ENCODE measurements at regions of chr10 and their contacts with region 1.

Region 1: DNA sequence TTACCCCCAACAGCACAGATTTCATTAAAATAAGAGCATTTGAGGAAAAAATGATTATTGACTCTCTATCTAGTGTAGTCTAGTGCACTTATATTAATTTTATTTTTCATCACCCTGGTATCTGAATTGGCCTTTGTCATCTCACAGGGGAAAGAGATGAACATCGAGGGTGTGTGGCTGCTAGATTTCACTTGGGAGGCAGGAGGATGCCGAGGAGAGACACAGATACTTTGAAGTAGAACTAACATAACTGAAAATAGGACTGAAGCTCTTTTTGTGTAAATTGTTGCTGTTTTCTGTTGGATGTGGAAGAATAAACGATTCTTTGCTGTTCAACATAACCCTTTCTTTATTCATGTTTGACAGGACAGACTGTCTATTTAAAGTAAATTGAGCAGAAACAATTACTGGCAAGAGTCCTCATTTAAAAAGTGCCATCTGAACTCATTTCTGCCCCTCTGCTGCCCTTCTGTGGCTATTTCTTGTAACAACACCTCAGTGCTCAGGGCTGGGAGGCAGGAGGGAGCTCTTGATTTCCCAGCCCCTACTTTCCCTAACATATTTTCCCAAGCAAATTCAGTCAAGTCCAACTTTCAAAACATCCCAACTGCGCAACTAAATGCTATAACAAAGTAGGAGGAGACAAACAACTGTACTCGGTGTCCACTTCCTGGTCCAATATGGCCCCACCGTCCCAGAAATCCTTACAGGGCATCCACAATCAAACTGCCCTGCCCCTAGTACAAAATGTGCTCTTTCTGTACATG is 15.6 kb downstream of the LYZL1 start:
- DNase-seq: peak; percentile 54 to 66
- H3K4me3 ChIP-seq: no peak overlapping the region
- H3K27ac ChIP-seq: no peak overlapping the region
- H3K4me1 ChIP-seq: no peaks in the 10 kb centered on the region
- H3K27me3 ChIP-seq: no peaks in the 10 kb centered on the region
- CTCF ChIP-seq: peak; percentile 26 to 87 (median 75)
- POLR2A ChIP-seq: no peak

Region 2: DNA sequence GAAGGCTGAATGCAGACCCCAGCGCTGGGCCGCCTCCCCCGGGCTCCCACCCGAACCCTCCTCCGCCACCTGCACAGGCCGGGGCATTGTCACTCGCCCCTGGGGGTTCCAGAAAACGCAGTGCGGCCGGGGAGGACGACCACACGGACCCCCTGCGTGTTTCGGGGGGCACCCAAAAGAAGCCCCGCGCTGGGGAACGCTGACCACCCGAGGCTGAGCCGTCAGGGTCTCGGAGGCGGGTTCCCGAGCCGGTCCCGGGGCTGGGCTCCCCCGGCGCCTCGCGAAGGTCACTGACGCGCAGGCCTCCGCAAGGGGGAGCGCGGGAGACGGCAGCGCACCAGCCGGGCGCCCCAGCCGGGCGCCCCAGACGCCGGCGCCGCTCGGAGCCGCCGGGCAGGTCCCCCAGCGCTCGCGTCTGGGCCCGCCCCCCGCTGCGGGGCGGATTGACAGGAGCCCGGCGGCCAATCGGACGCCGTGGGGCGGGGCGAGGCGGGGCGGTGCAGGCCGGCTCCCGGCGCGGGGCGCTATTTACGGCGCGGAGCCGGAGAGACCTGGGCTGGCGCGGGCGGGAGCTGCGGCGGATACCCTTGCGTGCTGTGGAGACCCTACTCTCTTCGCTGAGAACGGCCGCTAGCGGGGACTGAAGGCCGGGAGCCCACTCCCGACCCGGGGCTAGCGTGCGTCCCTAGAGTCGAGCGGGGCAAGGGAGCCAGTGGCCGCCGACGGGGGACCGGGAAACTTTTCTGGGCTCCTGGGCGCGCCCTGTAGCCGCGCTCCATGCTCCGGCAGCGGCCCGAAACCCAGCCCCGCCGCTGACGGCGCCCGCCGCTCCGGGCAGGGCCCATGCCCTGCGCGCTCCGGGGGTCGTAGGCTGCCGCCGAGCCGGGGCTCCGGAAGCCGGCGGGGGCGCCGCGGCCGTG is 627.2 kb before region 1 on chr10 and contains the start of gene BAMBI:
- intact Hi-C with region 1: loop called (anchors 5 kb)
- DNase-seq: peak; percentile 94
- H3K4me3 ChIP-seq: peak within 1 kb of the TSS; percentile 44 to 87 (median 57)
- H3K27ac ChIP-seq: no peak within 1 kb of the TSS
- H3K4me1 ChIP-seq: peaks cover 9 to 14% of the 10 kb centered on the region in 2 donors
- H3K27me3 ChIP-seq: no peaks in the 10 kb centered on the region
- CTCF ChIP-seq: peak in 5 of 6 experiments; percentile 23 to 84 (median 65)
- POLR2A ChIP-seq: peak in 1 of 2 donors; percentile 94
- total RNA-seq, gene BAMBI: 0.22 to 0.92 (median 0.53) TPM

Measured in thyroid gland (tissue), 4 donors.